GM12878 (cell line): ENCODE measurements at regions of chr9 and their contacts with region 1.

Region 1: GRCh38 chr9:6703898-6704639 is 53.7 kb upstream of the KDM4C start:
- DNase-seq: no peak
- ATAC-seq: peak; percentile 93
- H3K4me3 ChIP-seq: peak overlapping the region; percentile 78
- H3K27ac ChIP-seq: peak overlapping the region; percentile 86
- H3K4me1 ChIP-seq: peaks cover 11% of the 10 kb centered on the region
- H3K27me3 ChIP-seq: no peaks in the 10 kb centered on the region
- CTCF ChIP-seq: no peak
- EP300 ChIP-seq: no peak
- POLR2A ChIP-seq: peak; percentile 96
- RAD21 ChIP-seq: no peak

Region 2: GRCh38 chr9:6399071-6399470 is 305.0 kb before region 1 on chr9:
- CTCF ChIA-PET with region 1: no interaction called
- POLR2A ChIA-PET with region 1: no interaction called
- RAD21 ChIA-PET with region 1: no interaction called
- SMC1A ChIA-PET with region 1: no interaction called
- in situ Hi-C with region 1: no loop called
- intact Hi-C with region 1: no loop called
- DNase-seq: no peak
- ATAC-seq: no peak
- H3K4me3 ChIP-seq: no peak overlapping the region
- H3K27ac ChIP-seq: no peak overlapping the region
- H3K4me1 ChIP-seq: no peaks in the 10 kb centered on the region
- H3K27me3 ChIP-seq: no peaks in the 10 kb centered on the region
- CTCF ChIP-seq: no peak
- EP300 ChIP-seq: no peak
- POLR2A ChIP-seq: no peak
- RAD21 ChIP-seq: no peak

Region 3: DNA sequence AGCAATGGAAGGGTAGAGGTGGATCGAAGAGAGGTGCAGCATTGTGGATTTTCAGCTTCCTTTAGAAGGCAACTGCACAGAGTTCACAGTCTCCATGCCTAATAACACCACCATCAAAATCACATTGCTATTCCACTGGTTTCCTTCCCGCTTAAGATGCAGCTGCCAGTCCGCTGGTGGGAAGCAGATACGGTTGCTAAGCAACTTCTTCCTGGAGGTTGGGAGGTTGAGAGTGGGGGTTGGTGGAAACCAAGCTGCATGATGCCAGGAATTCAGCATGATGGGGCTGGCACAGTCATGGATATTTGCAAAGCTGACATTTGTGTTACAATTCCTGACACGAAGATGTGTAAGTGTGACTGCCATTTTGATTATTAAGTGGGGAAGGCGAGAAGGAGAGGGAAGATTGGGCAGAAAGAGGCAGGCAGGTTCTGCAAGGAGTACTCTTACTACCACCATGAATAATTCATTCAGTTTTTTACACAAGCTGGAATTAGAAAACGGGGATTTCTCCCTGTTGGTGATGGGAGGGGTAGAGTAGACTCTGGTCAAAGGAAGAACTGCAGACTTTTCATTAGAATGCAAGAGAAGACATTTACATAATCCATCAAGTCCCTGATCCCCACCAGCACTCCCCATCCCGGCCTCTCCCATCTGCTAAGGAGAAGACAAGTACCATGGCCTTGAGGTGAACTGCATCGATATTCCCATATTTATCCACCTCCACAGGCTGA is 146.0 kb before region 1 on chr9:
- CTCF ChIA-PET with region 1: no interaction called
- POLR2A ChIA-PET with region 1: no interaction called
- RAD21 ChIA-PET with region 1: no interaction called
- SMC1A ChIA-PET with region 1: no interaction called
- in situ Hi-C with region 1: no loop called
- intact Hi-C with region 1: no loop called
- DNase-seq: no peak
- ATAC-seq: no peak
- H3K4me3 ChIP-seq: no peak overlapping the region
- H3K27ac ChIP-seq: no peak overlapping the region
- H3K4me1 ChIP-seq: no peaks in the 10 kb centered on the region
- H3K27me3 ChIP-seq: no peaks in the 10 kb centered on the region
- CTCF ChIP-seq: no peak
- EP300 ChIP-seq: no peak
- POLR2A ChIP-seq: no peak
- RAD21 ChIP-seq: no peak

Region 4: DNA sequence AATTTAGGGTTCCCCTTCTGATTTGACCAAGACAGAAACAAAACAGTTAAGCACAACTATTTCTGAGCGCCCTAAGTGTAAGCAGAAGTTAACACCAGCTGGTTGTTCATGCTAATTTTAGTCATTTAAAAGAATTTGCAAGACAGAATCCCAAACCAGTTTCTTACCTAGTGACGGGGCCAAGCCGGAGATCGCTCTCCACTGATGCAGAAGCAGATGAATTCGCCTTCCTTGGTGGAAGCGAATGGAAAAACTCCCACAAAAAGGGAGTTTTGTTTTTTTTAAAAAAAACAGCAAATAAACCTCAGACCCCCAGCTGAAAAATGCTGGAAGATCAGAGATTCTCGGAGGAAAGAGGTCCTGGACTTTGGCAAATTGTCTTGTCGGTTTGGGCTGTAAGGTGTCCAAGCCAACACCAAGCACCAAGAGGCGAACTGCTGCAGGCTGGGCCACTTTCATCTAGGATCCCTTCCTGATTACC is 11.1 kb before region 1 on chr9:
- CTCF ChIA-PET with region 1: interaction called, 5 read pairs
- POLR2A ChIA-PET with region 1: interaction called, 43 read pairs
- RAD21 ChIA-PET with region 1: interaction called, 18 read pairs
- SMC1A ChIA-PET with region 1: interaction called, 8 read pairs
- in situ Hi-C with region 1: no loop called
- intact Hi-C with region 1: no loop called
- DNase-seq: no peak
- ATAC-seq: no peak
- H3K4me3 ChIP-seq: no peak overlapping the region; the same call in 1 of the 2 replicates
- H3K27ac ChIP-seq: peak overlapping the region; percentile 53
- H3K4me1 ChIP-seq: peaks cover 33% of the 10 kb centered on the region
- H3K27me3 ChIP-seq: no peaks in the 10 kb centered on the region
- CTCF ChIP-seq: no peak
- EP300 ChIP-seq: no peak
- POLR2A ChIP-seq: no peak
- RAD21 ChIP-seq: no peak

Region 5: GRCh38 chr9:6715755-6716643 is 11.9 kb after region 1 on chr9:
- CTCF ChIA-PET with region 1: interaction called, 5 read pairs
- POLR2A ChIA-PET with region 1: interaction called, 30 read pairs
- RAD21 ChIA-PET with region 1: interaction called, 13 read pairs
- SMC1A ChIA-PET with region 1: interaction called, 9 read pairs
- in situ Hi-C with region 1: no loop called
- intact Hi-C with region 1: no loop called
- DNase-seq: peak; percentile 76
- ATAC-seq: peak; percentile 96
- H3K4me3 ChIP-seq: peak overlapping the region; percentile 68
- H3K27ac ChIP-seq: peak overlapping the region; percentile 73
- H3K4me1 ChIP-seq: peaks cover 13% of the 10 kb centered on the region
- H3K27me3 ChIP-seq: no peaks in the 10 kb centered on the region
- CTCF ChIP-seq: no peak
- EP300 ChIP-seq: no peak
- POLR2A ChIP-seq: peak; percentile 97
- RAD21 ChIP-seq: no peak

Region 6: DNA sequence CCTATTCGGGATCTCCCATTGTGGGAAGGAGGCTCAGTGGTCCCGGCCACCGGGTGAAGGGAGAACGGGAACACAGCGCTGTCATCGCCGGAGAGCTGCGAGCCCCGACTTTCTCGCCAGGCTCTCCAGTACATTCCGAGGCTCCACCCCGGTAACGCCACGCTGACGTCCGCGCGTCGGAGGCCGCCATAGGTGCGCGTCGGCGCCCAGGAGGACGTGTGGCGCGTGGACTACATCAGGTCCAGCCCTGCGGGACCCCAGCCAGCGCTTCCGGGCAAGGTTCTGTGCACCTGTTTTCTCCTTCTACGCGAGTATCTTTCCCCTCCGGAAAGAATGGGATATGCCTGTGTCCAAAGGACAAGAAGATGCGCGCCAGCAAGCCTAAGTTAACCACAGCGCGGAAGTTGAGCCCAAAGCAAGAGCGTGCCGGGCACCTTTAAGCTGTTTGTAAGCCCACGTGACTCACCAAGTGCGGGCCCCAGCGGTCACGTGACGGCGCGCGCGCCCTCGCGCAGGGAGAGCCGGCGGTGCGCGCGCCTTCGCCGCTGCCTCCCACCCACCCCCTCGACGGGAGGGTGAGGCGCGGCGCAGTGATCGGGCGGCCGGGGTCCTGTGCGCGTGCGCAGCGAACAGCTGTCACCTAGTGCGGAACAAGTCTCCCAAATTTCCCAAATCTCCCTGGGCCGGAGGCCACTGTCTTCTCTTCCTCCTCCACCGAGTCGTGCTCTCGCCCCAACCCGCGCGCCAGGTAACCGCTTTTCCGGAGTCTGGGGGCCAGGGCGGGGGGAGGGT is 53.6 kb after region 1 on chr9 and contains the start of gene KDM4C:
- CTCF ChIA-PET with region 1: no interaction called
- POLR2A ChIA-PET with region 1: interaction called, 3 read pairs
- RAD21 ChIA-PET with region 1: interaction called, 6 read pairs
- SMC1A ChIA-PET with region 1: interaction called, 4 read pairs
- in situ Hi-C with region 1: no loop called
- intact Hi-C with region 1: loop called (anchors 5 kb)
- DNase-seq: peak; percentile 88
- ATAC-seq: peak; percentile 89
- H3K4me3 ChIP-seq: peak within 1 kb of the TSS; percentile 76
- H3K27ac ChIP-seq: peak within 1 kb of the TSS; percentile 96
- H3K4me1 ChIP-seq: peaks cover 6% of the 10 kb centered on the region
- H3K27me3 ChIP-seq: no peaks in the 10 kb centered on the region
- CTCF ChIP-seq: no peak
- EP300 ChIP-seq: peak in 1 of 2 experiments; percentile 54; a peak in 2 of 4 replicates
- POLR2A ChIP-seq: peak; percentile 95
- RAD21 ChIP-seq: no peak
- polyA plus RNA-seq, gene KDM4C: 6.8 to 11.7 TPM

Region 7: GRCh38 chr9:6802926-6803325 is 98.9 kb after region 1 on chr9:
- CTCF ChIA-PET with region 1: no interaction called
- POLR2A ChIA-PET with region 1: no interaction called
- RAD21 ChIA-PET with region 1: no interaction called
- SMC1A ChIA-PET with region 1: no interaction called
- in situ Hi-C with region 1: no loop called
- intact Hi-C with region 1: no loop called
- DNase-seq: no peak
- ATAC-seq: no peak
- H3K4me3 ChIP-seq: no peak overlapping the region
- H3K27ac ChIP-seq: no peak overlapping the region
- H3K4me1 ChIP-seq: no peaks in the 10 kb centered on the region
- H3K27me3 ChIP-seq: no peaks in the 10 kb centered on the region
- CTCF ChIP-seq: no peak
- EP300 ChIP-seq: no peak
- POLR2A ChIP-seq: no peak
- RAD21 ChIP-seq: no peak